ENCODE measurements at regions of chr17 and their contacts with region 1.

Region 1: GRCh38 chr17:41811549-41812380 is at the start of gene P3H4:
- DNase-seq: peak; percentile 79 to 94 (median 84)
- ATAC-seq: peak; percentile 87 to 92 (median 90)
- H3K4me3 ChIP-seq: peak within 1 kb of the TSS; percentile 67 to 79 (median 74)
- H3K27ac ChIP-seq: peak within 1 kb of the TSS; percentile 26 to 70 (median 66)
- H3K4me1 ChIP-seq: peaks cover 5 to 14% (median 7%) of the 10 kb centered on the region in 3 donors
- H3K27me3 ChIP-seq: no peaks in the 10 kb centered on the region
- CTCF ChIP-seq: peak; percentile 56 to 69 (median 61)
- total RNA-seq, gene P3H4: 8.4 to 15.7 (median 10.1) TPM

Region 2: GRCh38 chr17:41864836-41865595 is 53.3 kb after region 1 on chr17 and contains the start of gene KLHL11:
- intact Hi-C with region 1: loop called in 1 of 3 experiments (anchors 10 kb)
- DNase-seq: peak; percentile 86 to 94 (median 89)
- ATAC-seq: peak; percentile 97
- H3K4me3 ChIP-seq: peak within 1 kb of the TSS; percentile 88 to 99 (median 92)
- H3K27ac ChIP-seq: peak within 1 kb of the TSS; percentile 86 to 95 (median 88)
- H3K4me1 ChIP-seq: peaks cover 7 to 15% (median 12%) of the 10 kb centered on the region in 3 donors
- H3K27me3 ChIP-seq: no peaks in the 10 kb centered on the region
- CTCF ChIP-seq: no peak
- total RNA-seq, gene KLHL11: 4.3 to 7.8 (median 5.8) TPM

Measured in pancreas (tissue), 10 donors.